Right ventricle myocardium superior (tissue), 1 donor: ENCODE measurements at regions of chr18 and their contacts with region 1.

Region 1: GRCh38 chr18:55001394-55002024 is 42.2 kb upstream of the CCDC68 start:
- DNase-seq: no peak
- ATAC-seq: no peak

Region 2: DNA sequence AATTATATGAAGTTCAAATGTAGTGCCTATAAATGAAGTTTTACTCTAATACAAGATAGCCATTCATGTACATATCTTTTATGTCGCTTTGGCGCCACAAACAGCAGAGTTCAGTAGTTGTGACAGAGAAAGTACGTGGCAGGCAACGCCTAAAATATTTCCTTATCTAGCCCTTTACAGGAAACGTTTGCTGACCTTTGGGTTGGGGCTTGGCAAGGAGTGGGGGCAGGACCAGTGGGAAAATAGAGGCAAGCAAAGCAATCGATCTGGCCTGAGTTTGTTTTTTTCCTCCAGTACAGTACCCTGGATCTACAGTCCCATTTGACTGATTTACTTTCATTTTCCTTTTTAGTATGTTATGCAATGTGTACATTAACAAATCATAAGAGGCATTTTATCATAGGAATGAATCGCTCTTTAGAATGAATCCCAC is 55.3 kb before region 1 on chr18:
- intact Hi-C with region 1: loop called (anchors 10 kb)
- DNase-seq: peak; percentile 44
- ATAC-seq: peak; percentile 91